Uterus (tissue), 4 donors: ENCODE measurements at regions of chr13 and their contacts with region 1.

Region 1: GRCh38 chr13:110306960-110307746 is at the starts of genes COL4A1 and COL4A2:
- DNase-seq: peak; percentile 86 to 90
- H3K4me3 ChIP-seq: peak within 1 kb of the TSS; percentile 78 to 85
- H3K27ac ChIP-seq: peak within 1 kb of the TSS; percentile 99 to 100
- H3K4me1 ChIP-seq: peaks cover 0 to 15% of the 10 kb centered on the region in 2 donors
- H3K27me3 ChIP-seq: no peaks in the 10 kb centered on the region
- CTCF ChIP-seq: no peak
- POLR2A ChIP-seq: peak; percentile 99 to 100
- total RNA-seq, gene COL4A1: 164 to 737 (median 209) TPM
- total RNA-seq, gene COL4A2: 157 to 606 (median 284) TPM

Region 2: DNA sequence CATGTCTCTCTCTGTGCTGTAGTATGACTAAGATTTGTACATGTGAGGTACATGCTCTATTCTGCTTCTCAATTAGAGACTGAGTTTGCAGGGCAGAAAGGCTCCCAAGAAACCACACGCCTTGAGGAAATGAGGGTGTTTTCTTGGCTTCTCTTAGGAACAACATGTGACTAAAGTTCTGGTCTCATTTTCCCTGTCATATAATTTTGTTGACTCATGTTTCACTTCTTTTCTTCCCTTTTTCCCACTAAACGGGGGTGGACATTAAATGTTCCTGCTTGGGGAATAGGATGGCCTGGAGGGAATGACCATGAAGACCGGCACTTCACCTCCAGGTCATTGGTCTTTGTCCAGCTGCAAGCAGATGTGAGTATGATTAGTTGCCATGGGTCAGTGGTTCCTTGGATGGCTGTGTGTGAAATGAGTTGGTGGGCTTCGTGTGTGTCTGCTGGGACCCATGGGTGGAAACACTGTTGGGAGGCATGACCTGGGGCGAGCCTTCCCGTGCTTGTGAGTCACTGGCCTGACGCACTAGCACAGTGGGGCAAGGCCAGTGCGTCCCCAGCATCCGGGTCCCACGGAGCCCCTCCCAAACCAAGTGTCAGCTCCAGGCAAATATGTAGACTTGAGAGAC is 56.8 kb before region 1 on chr13:
- intact Hi-C with region 1: loop called (anchors 10 kb)
- DNase-seq: peak; percentile 70 to 71
- H3K4me3 ChIP-seq: no peak overlapping the region
- H3K27ac ChIP-seq: peak overlapping the region; percentile 82 to 91
- H3K4me1 ChIP-seq: peaks cover 9 to 15% of the 10 kb centered on the region in 2 donors
- H3K27me3 ChIP-seq: no peaks in the 10 kb centered on the region
- CTCF ChIP-seq: no peak
- POLR2A ChIP-seq: no peak